MCF 10A (cell line): ENCODE measurements at regions of chr18 and their contacts with region 1.

Region 1: GRCh38 chr18:9827641-9828505 is 57.9 kb upstream of the TXNDC2 start:
- DNase-seq: peak; percentile 100
- H3K4me3 Mint-ChIP-seq: peak overlapping the region; percentile 60
- H3K27ac Mint-ChIP-seq: peak overlapping the region; percentile 84
- H3K4me1 Mint-ChIP-seq: peaks cover 35% of the 10 kb centered on the region
- H3K27me3 Mint-ChIP-seq: no peaks in the 10 kb centered on the region
- CTCF ChIP-seq: no peak

Region 2: GRCh38 chr18:9766076-9766481 is 61.8 kb before region 1 on chr18:
- CTCF ChIA-PET with region 1: no interaction called
- POLR2A ChIA-PET with region 1: no interaction called
- intact Hi-C with region 1: no loop called
- DNase-seq: no peak
- H3K4me3 Mint-ChIP-seq: no peak overlapping the region
- H3K27ac Mint-ChIP-seq: no peak overlapping the region
- H3K4me1 Mint-ChIP-seq: no peaks in the 10 kb centered on the region
- H3K27me3 Mint-ChIP-seq: no peaks in the 10 kb centered on the region
- CTCF ChIP-seq: no peak

Region 3: GRCh38 chr18:9849407-9850281 is 21.8 kb after region 1 on chr18:
- CTCF ChIA-PET with region 1: interaction called, 4 read pairs
- POLR2A ChIA-PET with region 1: interaction called, 15 read pairs
- intact Hi-C with region 1: no loop called
- DNase-seq: no peak
- H3K4me3 Mint-ChIP-seq: no peak overlapping the region
- H3K27ac Mint-ChIP-seq: no peak overlapping the region
- H3K4me1 Mint-ChIP-seq: peaks cover 45% of the 10 kb centered on the region
- H3K27me3 Mint-ChIP-seq: peaks cover 11% of the 10 kb centered on the region
- CTCF ChIP-seq: no peak

Region 4: DNA sequence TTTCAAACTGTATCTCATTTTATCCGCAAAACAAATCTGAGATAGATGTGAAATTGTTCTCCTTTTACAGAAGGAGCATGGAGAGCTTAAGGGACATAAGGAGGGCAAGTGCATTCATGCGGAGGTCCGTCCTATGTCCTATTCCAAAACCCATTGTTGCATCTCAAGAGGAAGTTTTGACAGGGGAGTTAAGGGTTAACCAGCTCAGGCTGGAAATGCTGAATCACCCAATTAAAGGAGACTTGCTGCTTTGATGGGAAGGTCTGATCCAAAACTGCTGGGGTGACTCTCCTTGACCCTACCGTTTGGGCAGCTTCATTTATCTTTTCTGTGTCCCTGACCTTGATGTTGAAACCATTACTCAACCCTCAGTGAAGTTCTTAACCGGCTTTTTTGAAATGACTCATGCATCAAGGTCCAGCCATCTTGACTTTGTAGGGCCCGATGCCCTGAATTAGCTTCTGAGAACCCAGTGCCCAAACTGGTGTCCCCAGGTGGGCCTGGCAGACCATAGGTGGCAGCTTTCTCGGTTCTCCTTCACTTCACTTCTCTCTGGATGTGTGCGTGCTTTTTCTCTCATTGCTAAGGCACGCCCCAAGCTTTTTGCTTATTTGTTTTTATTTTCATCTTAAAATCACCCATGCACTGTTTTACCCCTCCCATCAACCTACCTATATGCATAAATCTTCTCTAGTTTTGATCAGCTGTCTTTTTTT is 42.0 kb after region 1 on chr18:
- CTCF ChIA-PET with region 1: no interaction called
- POLR2A ChIA-PET with region 1: interaction called, 11 read pairs
- intact Hi-C with region 1: no loop called
- DNase-seq: peak; percentile 92
- H3K4me3 Mint-ChIP-seq: no peak overlapping the region
- H3K27ac Mint-ChIP-seq: peak overlapping the region; percentile 84
- H3K4me1 Mint-ChIP-seq: peaks cover 35% of the 10 kb centered on the region
- H3K27me3 Mint-ChIP-seq: no peaks in the 10 kb centered on the region
- CTCF ChIP-seq: no peak

Region 5: DNA sequence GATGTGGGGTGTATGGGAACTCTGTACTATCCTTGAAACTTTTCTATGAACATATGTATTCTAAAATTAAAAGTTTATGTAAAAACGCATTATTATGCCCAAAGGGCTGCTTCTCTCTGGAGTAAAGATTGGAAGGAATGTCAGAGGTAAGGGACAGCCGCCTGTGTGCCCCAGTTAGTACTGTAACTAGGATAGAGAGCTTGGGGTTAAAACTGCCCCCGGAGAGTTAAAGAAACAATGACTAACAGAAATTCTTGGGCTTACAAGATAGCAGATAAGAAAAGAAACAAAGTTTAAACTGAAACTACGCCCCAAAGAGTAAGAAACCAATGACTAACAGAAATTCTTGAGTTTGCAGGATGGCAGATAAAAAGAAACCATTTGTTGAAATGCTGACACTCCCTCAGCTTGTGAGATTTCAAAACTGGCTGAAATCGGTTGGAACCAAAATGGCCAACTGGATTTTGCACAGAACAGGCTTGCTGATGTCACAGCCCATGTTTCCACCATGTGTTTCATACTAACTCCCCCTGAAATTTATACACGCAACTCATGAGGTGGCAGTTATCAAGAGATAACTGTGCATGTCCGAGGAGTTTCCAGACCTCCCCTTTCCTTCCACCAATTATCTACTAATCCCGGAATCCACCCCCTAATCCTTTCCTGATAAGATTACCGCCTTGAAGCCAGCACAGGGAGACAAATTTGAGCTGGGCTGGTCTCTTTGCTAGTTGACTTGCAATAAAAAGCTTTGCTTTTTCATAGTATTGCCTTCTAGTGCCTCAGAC is 49.2 kb after region 1 on chr18:
- CTCF ChIA-PET with region 1: no interaction called
- POLR2A ChIA-PET with region 1: interaction called, 11 read pairs
- intact Hi-C with region 1: no loop called
- DNase-seq: peak; percentile 59
- H3K4me3 Mint-ChIP-seq: peak overlapping the region; percentile 53
- H3K27ac Mint-ChIP-seq: peak overlapping the region; percentile 60
- H3K4me1 Mint-ChIP-seq: peaks cover 12% of the 10 kb centered on the region
- H3K27me3 Mint-ChIP-seq: no peaks in the 10 kb centered on the region
- CTCF ChIP-seq: no peak